ENCODE measurements at regions of chr1 and their contacts with region 1.

Region 1: GRCh38 chr1:101081496-101082488 is 56.2 kb upstream of the DPH5 start:
- DNase-seq: peak in 7 of 9 donors; percentile 24 to 49 (median 40)
- ATAC-seq: peak; percentile 95
- H3K4me3 ChIP-seq: no peak overlapping the region
- H3K4me3 Mint-ChIP-seq: peak overlapping the region; percentile 42 to 79 (median 72)
- H3K27ac ChIP-seq: no peak overlapping the region
- H3K27ac Mint-ChIP-seq: peak overlapping the region; percentile 69 to 95 (median 82)
- H3K4me1 ChIP-seq: peaks cover 29 to 31% of the 10 kb centered on the region in 2 donors
- H3K4me1 Mint-ChIP-seq: peaks cover 29 to 63% (median 57%) of the 10 kb centered on the region in 7 donors
- H3K27me3 ChIP-seq: no peaks in the 10 kb centered on the region
- H3K27me3 Mint-ChIP-seq: no peaks in the 10 kb centered on the region

Region 2: GRCh38 chr1:100928128-100928527 is 153.7 kb before region 1 on chr1:
- CTCF ChIA-PET with region 1: no interaction called
- POLR2A ChIA-PET with region 1: interaction called, 4 read pairs
- intact Hi-C with region 1: loop called in 1 of 2 experiments (anchors 1 kb)
- DNase-seq: peak in 1 of 9 donors; percentile 9
- ATAC-seq: peak; percentile 30
- H3K4me3 ChIP-seq: peak overlapping the region; percentile 15
- H3K4me3 Mint-ChIP-seq: no peak overlapping the region
- H3K27ac ChIP-seq: peak overlapping the region; percentile 74
- H3K27ac Mint-ChIP-seq: no peak overlapping the region
- H3K4me1 ChIP-seq: peaks cover 76 to 84% of the 10 kb centered on the region in 2 donors
- H3K4me1 Mint-ChIP-seq: peaks cover 26 to 61% (median 39%) of the 10 kb centered on the region in 7 donors
- H3K27me3 ChIP-seq: no peaks in the 10 kb centered on the region
- H3K27me3 Mint-ChIP-seq: no peaks in the 10 kb centered on the region

Region 3: DNA sequence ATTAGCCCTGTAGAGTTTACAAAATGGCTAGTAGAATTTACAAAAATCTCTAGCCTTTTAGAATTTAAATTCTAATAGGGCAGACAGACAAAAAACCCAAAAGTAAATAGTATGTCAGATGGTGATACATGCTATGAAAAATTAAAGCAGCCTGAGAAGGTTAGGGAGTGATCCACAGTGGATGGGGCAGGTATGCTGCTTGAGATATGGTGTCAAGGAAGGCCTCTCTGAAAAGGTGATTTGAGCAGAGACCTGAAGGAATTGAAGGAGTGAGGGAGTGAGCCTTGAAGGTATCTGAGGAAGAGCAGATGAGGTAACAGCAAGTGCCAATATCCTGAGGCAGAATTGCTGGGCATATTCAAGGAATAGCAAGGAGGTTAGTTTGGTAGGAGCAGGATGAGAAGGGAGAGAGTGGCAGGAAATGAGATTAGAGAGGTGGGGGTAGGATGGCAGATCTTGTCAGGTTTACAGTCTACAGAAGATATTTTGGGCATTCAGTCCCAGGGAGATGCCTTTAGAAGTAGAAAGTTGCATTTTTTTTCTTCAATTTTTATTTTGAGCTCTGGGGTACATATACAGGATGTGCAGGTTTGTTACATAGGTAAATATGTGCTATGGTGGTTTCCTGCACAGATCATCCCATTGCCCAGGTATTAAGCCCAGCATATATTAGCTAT is 15.4 kb before region 1 on chr1:
- CTCF ChIA-PET with region 1: no interaction called
- POLR2A ChIA-PET with region 1: interaction called, 8 read pairs
- intact Hi-C with region 1: loop called (anchors 2 kb)
- DNase-seq: peak in 2 of 9 donors; percentile 1 to 21
- ATAC-seq: peak; percentile 14
- H3K4me3 ChIP-seq: no peak overlapping the region
- H3K4me3 Mint-ChIP-seq: peak overlapping the region; percentile 6 to 82 (median 38)
- H3K27ac ChIP-seq: peak overlapping the region; percentile 60
- H3K27ac Mint-ChIP-seq: peak overlapping the region; percentile 64 to 96 (median 88)
- H3K4me1 ChIP-seq: peaks cover 8 to 31% of the 10 kb centered on the region in 2 donors
- H3K4me1 Mint-ChIP-seq: peaks cover 31 to 81% (median 71%) of the 10 kb centered on the region in 7 donors
- H3K27me3 ChIP-seq: no peaks in the 10 kb centered on the region
- H3K27me3 Mint-ChIP-seq: no peaks in the 10 kb centered on the region

Region 4: DNA sequence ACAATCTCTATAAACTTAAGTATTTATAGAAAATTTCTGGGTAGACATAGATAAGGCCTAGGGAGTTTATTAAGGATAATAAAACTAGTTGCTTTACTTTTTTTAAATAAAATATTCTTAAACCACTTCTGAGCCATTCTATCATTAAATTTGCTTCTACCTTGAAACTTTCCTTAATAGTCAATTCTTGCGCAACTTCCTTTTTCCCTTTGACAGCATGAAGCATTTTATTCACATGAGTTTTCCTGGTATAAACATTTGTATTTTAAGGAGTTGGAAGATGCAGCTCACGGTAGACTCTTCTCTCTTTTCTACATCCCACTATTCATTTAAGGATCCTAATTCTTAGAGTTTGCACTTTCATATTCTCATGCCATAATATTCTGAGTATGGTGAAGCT is 19.6 kb after region 1 on chr1:
- CTCF ChIA-PET with region 1: interaction called, 4 read pairs
- POLR2A ChIA-PET with region 1: interaction called, 3 read pairs
- intact Hi-C with region 1: loop called in 1 of 2 experiments (anchors 2 kb)
- DNase-seq: no peak
- ATAC-seq: no peak
- H3K4me3 ChIP-seq: no peak overlapping the region
- H3K4me3 Mint-ChIP-seq: peak overlapping the region in 1 of 10 donors; percentile 23
- H3K27ac ChIP-seq: no peak overlapping the region
- H3K27ac Mint-ChIP-seq: peak overlapping the region in 1 of 9 donors; percentile 69
- H3K4me1 ChIP-seq: no peaks in the 10 kb centered on the region
- H3K4me1 Mint-ChIP-seq: peaks cover under 1 to 12% (median 7%) of the 10 kb centered on the region in 7 donors
- H3K27me3 ChIP-seq: no peaks in the 10 kb centered on the region
- H3K27me3 Mint-ChIP-seq: no peaks in the 10 kb centered on the region

Region 5: GRCh38 chr1:101178688-101179491 is 97.1 kb after region 1 on chr1:
- CTCF ChIA-PET with region 1: no interaction called
- POLR2A ChIA-PET with region 1: no interaction called
- intact Hi-C with region 1: loop called in 1 of 2 experiments (anchors 1 kb)
- DNase-seq: peak in 7 of 9 donors; percentile 40 to 61 (median 46)
- ATAC-seq: peak; percentile 78
- H3K4me3 ChIP-seq: peak overlapping the region; percentile 3
- H3K4me3 Mint-ChIP-seq: peak overlapping the region; percentile 63 to 90 (median 80)
- H3K27ac ChIP-seq: peak overlapping the region; percentile 60
- H3K27ac Mint-ChIP-seq: peak overlapping the region; percentile 86 to 98 (median 92)
- H3K4me1 ChIP-seq: peaks cover 12 to 20% of the 10 kb centered on the region in 2 donors
- H3K4me1 Mint-ChIP-seq: peaks cover 24 to 69% (median 51%) of the 10 kb centered on the region in 7 donors
- H3K27me3 ChIP-seq: no peaks in the 10 kb centered on the region
- H3K27me3 Mint-ChIP-seq: no peaks in the 10 kb centered on the region

Measured in naive thymus-derived CD4-positive, alpha-beta T cell (primary cell).